Mammary epithelial cell (primary cell): ENCODE measurements at regions of chr3 and their contacts with region 1.

Region 1: GRCh38 chr3:27533718-27534573 is 49.8 kb upstream of the SLC4A7 start:
- DNase-seq: peak; percentile 100
- H3K4me3 ChIP-seq: peak overlapping the region in 1 of 3 experiments; percentile 37
- H3K27ac ChIP-seq: peak overlapping the region; percentile 96
- H3K4me1 ChIP-seq: peaks cover 44% of the 10 kb centered on the region
- H3K27me3 ChIP-seq: no peaks in the 10 kb centered on the region
- CTCF ChIP-seq: peak; percentile 68 to 75

Region 2: GRCh38 chr3:27431116-27431515 is 102.8 kb before region 1 on chr3:
- CTCF ChIA-PET with region 1: no interaction called
- dilution Hi-C with region 1: no loop called
- in situ Hi-C with region 1: no loop called
- intact Hi-C with region 1: loop called (anchors 1 kb)
- DNase-seq: peak; percentile 77
- H3K4me3 ChIP-seq: no peak overlapping the region
- H3K27ac ChIP-seq: no peak overlapping the region
- H3K4me1 ChIP-seq: peaks cover 7% of the 10 kb centered on the region
- H3K27me3 ChIP-seq: no peaks in the 10 kb centered on the region
- CTCF ChIP-seq: no peak

Region 3: DNA sequence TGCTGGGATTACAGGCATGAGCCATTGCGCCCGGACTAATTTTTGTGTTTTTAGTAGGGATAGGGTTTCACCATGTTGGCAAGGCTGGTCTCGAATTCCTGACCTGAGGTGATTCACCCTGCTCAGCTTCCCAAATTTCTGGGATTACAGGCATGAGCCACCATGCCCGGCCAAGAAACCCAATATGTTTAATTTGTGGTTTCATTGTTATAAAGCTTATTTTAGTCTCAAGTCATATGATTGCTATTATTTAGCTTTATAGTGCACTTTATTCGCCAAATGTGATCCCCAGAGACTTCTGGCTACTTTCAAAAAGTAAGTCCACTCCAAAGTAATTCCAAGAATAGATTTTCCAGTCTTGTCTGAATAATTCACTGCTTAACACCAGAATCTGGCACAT is 30.4 kb before region 1 on chr3:
- CTCF ChIA-PET with region 1: no interaction called
- dilution Hi-C with region 1: no loop called
- in situ Hi-C with region 1: no loop called
- intact Hi-C with region 1: loop called (anchors 1 kb)
- DNase-seq: peak; percentile 17
- H3K4me3 ChIP-seq: no peak overlapping the region
- H3K27ac ChIP-seq: no peak overlapping the region
- H3K4me1 ChIP-seq: peaks cover 12% of the 10 kb centered on the region
- H3K27me3 ChIP-seq: no peaks in the 10 kb centered on the region
- CTCF ChIP-seq: no peak

Region 4: DNA sequence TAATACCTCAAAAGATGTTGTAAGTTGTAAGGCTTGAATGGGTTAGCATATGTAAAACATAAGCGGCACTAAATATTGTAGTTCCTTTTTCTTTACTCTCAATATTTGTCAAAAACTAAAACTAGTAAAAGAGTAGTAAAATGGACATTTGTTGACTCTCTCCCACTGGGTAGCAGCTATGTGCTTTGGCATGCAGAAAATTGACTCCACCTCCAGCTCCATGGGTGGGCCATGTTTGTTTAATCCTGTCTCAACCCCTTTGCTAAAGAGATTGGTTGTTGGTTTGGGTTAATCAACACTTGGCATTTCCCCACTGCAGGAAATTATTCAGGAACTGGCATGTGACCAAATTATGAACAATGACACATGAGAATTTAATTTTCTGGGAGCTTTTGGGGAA is 73.4 kb after region 1 on chr3:
- CTCF ChIA-PET with region 1: no interaction called
- dilution Hi-C with region 1: no loop called
- in situ Hi-C with region 1: no loop called
- intact Hi-C with region 1: loop called (anchors 2 kb)
- DNase-seq: peak; percentile 57
- H3K4me3 ChIP-seq: no peak overlapping the region
- H3K27ac ChIP-seq: no peak overlapping the region
- H3K4me1 ChIP-seq: peaks cover 15% of the 10 kb centered on the region
- H3K27me3 ChIP-seq: no peaks in the 10 kb centered on the region
- CTCF ChIP-seq: no peak

Region 5: DNA sequence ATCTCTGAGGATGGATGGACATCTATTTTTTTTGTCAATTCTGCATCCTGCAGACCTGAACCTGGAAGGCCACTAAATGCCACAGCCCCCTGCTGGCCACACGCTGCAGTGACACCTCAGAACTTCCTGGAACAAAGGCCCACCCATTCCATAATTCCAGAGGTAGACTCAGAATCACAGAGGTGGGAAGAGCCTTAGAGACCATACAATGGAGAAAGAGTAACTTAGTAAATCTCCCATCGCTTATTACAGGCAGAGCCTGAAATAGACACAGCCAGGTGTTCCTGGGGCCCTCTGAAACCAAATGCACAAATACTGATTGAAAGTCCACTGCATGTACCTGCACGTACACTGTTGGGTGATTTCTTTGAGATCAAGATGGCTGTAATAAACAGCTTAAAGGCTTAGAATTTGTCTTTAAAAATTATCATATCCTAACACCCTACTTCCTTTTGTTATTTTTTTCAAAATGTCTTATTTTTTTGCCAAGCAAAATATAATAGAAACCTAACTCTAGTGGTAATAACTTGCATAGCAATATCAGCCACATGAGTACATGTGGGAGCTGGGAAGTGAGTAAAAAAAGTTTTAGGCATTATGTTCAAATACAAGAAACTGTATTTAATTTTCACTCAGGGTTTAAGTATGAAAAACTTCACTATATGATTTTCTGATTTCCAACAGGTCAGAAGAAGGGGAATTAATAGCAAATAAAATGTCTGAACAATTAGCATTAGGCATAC is 125.5 kb after region 1 on chr3:
- CTCF ChIA-PET with region 1: no interaction called
- dilution Hi-C with region 1: loop called (anchors 10 kb)
- in situ Hi-C with region 1: loop called in 1 of 2 experiments (anchors 25 kb)
- intact Hi-C with region 1: loop called (anchors 1 kb)
- DNase-seq: peak; percentile 41
- H3K4me3 ChIP-seq: no peak overlapping the region
- H3K27ac ChIP-seq: no peak overlapping the region
- H3K4me1 ChIP-seq: peaks cover 30% of the 10 kb centered on the region
- H3K27me3 ChIP-seq: no peaks in the 10 kb centered on the region
- CTCF ChIP-seq: peak; percentile 88 to 95